ENCODE measurements at regions of chr5 and their contacts with region 1.

Region 1: DNA sequence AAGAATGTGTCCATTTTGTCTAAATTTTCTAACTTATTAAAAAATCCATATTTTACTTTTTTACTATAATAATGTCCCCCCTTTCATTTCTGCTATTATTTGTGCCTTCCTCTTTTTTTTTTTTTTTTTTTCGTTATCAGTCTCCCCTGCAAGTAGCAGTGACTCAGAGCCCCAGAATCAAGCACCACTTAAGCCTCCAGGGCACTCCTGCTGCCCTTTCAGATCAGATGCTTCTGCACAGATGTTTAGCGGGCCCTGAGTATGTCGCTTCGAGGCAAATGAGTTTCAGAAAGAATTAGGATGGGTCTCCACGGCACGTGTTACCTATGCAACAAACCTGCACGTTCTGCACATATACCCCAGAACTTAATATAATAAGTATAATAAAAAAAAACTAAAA is 11.7 kb downstream of the MED7 start:
- DNase-seq: peak; percentile 15 to 49
- H3K4me3 ChIP-seq: no peak overlapping the region
- H3K27ac ChIP-seq: no peak overlapping the region
- H3K4me1 ChIP-seq: no peaks in the 10 kb centered on the region
- H3K27me3 ChIP-seq: no peaks in the 10 kb centered on the region
- CTCF ChIP-seq: no peak

Region 2: GRCh38 chr5:155136216-155136850 is 1994.6 kb before region 1 on chr5:
- CTCF ChIA-PET with region 1: interaction called, 3 read pairs
- POLR2A ChIA-PET with region 1: interaction called, 4 read pairs
- intact Hi-C with region 1: loop called (anchors 1 kb)
- DNase-seq: no peak
- H3K4me3 ChIP-seq: no peak overlapping the region
- H3K27ac ChIP-seq: no peak overlapping the region
- H3K4me1 ChIP-seq: no peaks in the 10 kb centered on the region
- H3K27me3 ChIP-seq: peaks cover 8% of the 10 kb centered on the region
- CTCF ChIP-seq: no peak

Region 3: DNA sequence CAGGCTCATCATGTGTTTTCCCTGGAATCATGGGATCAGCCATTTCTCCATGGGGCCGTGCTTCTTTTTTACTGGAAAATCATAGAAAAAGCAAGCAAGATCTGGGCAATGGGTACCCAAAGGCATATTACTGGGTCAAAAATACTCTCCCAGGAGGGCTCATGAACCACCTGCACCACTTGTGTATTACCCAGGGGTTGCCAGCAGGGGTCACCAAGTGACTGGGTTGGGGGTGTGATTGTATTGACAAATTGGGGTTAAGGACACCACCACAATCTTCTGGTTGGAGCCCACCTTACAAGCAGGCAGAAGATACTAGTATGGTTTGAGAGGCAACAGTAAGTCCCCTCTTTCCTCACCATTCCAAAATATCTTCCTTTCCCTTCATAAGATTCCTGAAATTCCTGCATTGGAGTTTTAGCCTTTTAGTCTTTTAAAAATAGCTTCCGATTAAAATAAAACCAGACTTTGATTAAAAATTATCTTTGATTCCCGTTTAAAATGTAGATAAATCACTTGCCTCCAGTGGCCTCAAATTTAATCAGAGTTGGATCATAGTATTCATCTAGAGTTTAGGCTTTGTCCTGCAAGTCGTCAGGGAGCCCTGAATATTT is 1514.0 kb before region 1 on chr5:
- CTCF ChIA-PET with region 1: interaction called, 3 read pairs
- POLR2A ChIA-PET with region 1: no interaction called
- intact Hi-C with region 1: loop called (anchors 10 kb)
- DNase-seq: peak in 1 of 2 experiments; percentile 27
- H3K4me3 ChIP-seq: no peak overlapping the region
- H3K27ac ChIP-seq: no peak overlapping the region
- H3K4me1 ChIP-seq: no peaks in the 10 kb centered on the region
- H3K27me3 ChIP-seq: no peaks in the 10 kb centered on the region
- CTCF ChIP-seq: peak; percentile 72

Region 4: GRCh38 chr5:155943516-155944407 is 1187.2 kb before region 1 on chr5:
- CTCF ChIA-PET with region 1: interaction called, 5 read pairs
- POLR2A ChIA-PET with region 1: no interaction called
- intact Hi-C with region 1: loop called (anchors 1 kb)
- DNase-seq: peak in 1 of 2 experiments; percentile 14
- H3K4me3 ChIP-seq: no peak overlapping the region
- H3K27ac ChIP-seq: no peak overlapping the region
- H3K4me1 ChIP-seq: no peaks in the 10 kb centered on the region
- H3K27me3 ChIP-seq: no peaks in the 10 kb centered on the region
- CTCF ChIP-seq: peak; percentile 65

Region 5: GRCh38 chr5:156835905-156836304 is 295.0 kb before region 1 on chr5:
- CTCF ChIA-PET with region 1: no interaction called
- POLR2A ChIA-PET with region 1: no interaction called
- intact Hi-C with region 1: loop called (anchors 10 kb)
- DNase-seq: no peak
- H3K4me3 ChIP-seq: no peak overlapping the region
- H3K27ac ChIP-seq: no peak overlapping the region
- H3K4me1 ChIP-seq: no peaks in the 10 kb centered on the region
- H3K27me3 ChIP-seq: 0 out of 2 replicates have a peak, but pooled peaks cover 4% of the 10 kb centered on the region
- CTCF ChIP-seq: no peak; the same call in 1 of the 2 replicates

Region 6: DNA sequence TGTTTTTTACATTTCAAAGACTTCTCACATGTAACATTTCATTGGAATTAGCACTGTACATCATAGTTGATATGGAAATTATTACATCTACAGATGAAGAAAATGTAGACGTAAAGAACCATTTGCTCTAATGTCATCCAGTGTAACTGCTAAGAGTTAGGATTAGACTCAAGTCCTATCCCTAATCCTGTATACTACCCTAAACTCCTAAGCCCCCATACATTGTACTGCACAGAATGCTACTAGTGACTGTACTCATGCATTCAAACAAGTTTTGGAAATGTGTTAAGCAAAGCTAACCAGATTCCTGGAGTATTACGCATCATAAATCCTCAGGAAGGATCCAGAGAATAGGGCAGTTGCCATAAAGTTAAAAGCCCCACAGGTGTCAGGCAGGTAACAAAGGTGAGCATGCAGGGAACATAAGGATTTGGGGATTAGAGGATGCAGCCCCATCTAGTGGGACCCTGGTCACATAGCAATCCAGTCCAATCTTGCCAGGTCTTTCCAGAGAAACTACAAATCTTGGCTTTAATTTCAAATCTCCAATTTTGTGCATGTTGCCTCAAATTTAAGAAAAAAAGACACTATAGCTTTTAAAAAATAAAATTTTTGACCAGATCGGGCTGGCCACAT is 104.0 kb before region 1 on chr5:
- CTCF ChIA-PET with region 1: no interaction called
- POLR2A ChIA-PET with region 1: no interaction called
- intact Hi-C with region 1: loop called (anchors 5 kb)
- DNase-seq: peak; percentile 33 to 39
- H3K4me3 ChIP-seq: no peak overlapping the region
- H3K27ac ChIP-seq: no peak overlapping the region
- H3K4me1 ChIP-seq: no peaks in the 10 kb centered on the region
- H3K27me3 ChIP-seq: peaks cover 15% of the 10 kb centered on the region
- CTCF ChIP-seq: peak; percentile 72

Region 7: DNA sequence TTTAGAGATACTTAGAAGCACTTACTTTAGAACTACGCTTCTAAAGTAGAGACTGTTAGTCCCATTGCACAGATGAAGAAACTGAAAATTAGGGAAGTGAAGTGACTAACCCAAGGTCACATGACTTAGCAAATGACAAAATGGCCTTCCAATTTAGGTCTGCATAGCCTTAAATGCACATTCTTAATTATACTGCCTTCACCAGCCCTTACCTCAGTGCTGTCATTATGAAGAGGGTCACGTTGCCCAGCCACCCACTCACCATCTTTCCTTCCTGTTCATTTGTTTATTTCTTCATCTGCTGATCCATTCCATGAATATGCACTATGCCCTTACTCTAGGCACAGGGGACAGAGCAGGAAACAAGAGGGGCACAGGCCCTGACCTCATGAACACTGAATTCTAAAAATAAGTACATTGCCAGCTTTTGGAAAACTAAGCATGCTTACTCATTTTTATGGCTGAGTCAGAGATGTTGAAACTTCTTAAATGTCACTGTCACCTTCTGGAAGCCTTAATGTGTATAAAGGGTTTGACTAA is 30.7 kb before region 1 on chr5:
- CTCF ChIA-PET with region 1: no interaction called
- POLR2A ChIA-PET with region 1: interaction called, 10 read pairs
- intact Hi-C with region 1: no loop called
- DNase-seq: peak in 1 of 2 experiments; percentile 37
- H3K4me3 ChIP-seq: no peak overlapping the region
- H3K27ac ChIP-seq: peak overlapping the region; percentile 31; the same call in 1 of the 2 replicates
- H3K4me1 ChIP-seq: no peaks in the 10 kb centered on the region; the same call in 1 of the 2 replicates
- H3K27me3 ChIP-seq: no peaks in the 10 kb centered on the region
- CTCF ChIP-seq: no peak

Measured in PC-9 (cell line).